ENCODE measurements at regions of chr12 and their contacts with region 1.

Region 1: GRCh38 chr12:751192-751998 is 984 bp upstream of the WNK1 start:
- DNase-seq: peak; percentile 89
- H3K4me3 Mint-ChIP-seq: no peak overlapping the region
- H3K27ac Mint-ChIP-seq: no peak overlapping the region
- H3K4me1 Mint-ChIP-seq: peaks cover 21% of the 10 kb centered on the region
- H3K27me3 Mint-ChIP-seq: no peaks in the 10 kb centered on the region

Region 2: DNA sequence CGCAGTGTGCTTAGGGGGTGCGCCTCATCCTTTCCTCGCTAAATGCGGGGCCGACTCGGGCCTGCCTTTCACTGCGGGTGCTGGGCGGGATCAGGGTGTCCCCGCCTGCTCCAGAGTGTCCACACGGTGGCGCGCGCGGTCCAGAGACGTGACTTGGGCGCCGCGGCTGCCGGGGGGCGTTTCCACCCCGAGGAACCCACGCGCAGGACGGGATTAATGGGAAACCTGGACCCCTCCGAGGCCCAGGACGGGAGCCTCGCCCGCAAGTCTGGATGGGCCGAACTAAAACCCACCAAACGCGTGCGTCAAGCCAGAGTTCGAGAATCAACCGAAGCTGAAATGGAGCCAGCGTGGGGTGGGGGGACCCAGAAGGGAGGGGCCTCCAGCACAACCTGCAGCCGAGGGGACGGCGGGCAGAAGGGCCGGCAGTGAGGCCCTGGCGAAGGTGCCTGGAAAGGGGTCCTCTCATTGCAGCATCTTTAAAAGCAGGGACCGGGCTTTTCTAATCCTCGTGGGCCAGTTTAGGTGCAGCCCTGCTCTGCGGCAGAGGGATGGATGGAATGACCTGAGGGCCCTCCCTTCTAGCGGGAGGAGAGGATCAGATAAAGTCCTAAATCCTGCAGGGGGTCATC is 181.5 kb before region 1 on chr12:
- CTCF ChIA-PET with region 1: interaction called, 91 read pairs
- POLR2A ChIA-PET with region 1: interaction called, 3 read pairs
- DNase-seq: peak; percentile 88
- H3K4me3 Mint-ChIP-seq: peak overlapping the region; percentile 73
- H3K27ac Mint-ChIP-seq: peak overlapping the region; percentile 68
- H3K4me1 Mint-ChIP-seq: peaks cover 77% of the 10 kb centered on the region
- H3K27me3 Mint-ChIP-seq: no peaks in the 10 kb centered on the region

Region 3: DNA sequence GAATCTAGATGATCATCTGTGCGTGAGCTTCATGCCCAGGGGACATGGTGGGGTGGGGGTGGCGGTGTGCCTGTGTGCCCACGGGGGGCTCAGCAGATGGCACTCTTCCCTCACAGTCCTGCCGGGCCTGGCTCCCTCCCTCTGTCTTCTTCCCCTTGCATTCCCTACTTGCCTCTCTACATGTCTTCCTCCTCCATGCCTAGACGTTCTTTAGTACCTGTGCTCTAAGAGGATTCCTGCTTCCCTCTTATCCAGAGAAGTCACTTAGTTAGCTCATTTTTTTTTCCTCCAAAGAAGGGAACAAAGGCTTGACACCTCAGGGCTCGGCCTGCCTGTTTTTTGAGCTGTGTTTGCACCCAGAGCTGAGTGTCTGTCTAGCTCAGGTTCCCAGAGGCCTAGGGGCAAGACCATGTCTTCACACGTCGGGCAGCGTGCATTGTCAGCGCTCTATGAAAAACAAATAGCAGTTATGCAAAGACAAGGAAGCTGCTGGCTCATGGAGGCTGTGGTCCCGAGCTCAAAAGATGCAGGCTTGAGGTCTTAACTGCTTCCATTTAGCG is 136.9 kb before region 1 on chr12:
- CTCF ChIA-PET with region 1: interaction called, 16 read pairs
- POLR2A ChIA-PET with region 1: interaction called, 5 read pairs
- DNase-seq: peak; percentile 32
- H3K4me3 Mint-ChIP-seq: no peak overlapping the region
- H3K27ac Mint-ChIP-seq: no peak overlapping the region
- H3K4me1 Mint-ChIP-seq: peaks cover 50% of the 10 kb centered on the region
- H3K27me3 Mint-ChIP-seq: no peaks in the 10 kb centered on the region

Region 4: DNA sequence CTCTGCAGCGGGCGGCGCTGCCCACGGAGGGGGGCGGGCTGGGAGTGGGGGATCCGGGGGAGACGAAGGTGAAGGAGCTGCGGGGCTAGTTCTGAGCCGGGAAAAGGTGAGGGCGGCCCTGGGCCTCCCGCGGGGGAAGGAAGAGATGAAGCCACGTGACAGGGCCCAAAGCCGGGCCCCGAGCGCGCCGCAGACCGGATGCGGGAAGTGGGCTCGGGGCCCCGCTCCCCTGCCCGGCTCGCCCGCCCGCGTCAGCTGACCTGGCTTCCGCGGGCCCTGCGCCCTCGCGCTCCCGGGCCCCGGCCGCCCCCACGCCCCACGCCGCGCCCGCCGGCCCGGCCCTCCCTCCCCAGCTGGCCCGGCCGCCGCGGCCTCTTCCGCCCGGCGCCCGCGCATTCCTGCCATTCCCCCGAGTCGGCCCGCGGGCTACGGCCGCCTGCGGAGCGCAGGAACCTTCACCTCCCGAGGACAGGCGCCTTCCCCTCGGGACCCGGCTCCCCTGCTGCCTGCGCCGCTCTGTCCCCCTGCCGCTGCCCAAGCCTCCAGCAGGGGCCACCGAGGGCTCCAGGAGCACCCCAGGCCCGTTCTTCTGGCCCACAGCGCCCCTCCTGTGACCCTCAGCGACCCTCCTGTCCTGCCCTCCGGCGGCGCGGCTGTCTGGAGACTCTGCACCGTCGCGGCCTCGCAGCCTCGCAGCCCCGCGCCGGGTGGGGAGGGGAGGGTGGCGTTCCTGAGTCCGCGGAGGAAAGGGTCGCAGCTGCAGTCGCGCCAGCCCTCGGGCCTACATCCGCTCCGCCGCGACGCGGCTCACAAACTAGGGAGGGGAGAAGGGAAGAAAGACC is 108.5 kb before region 1 on chr12:
- CTCF ChIA-PET with region 1: interaction called, 18 read pairs
- POLR2A ChIA-PET with region 1: interaction called, 3 read pairs
- DNase-seq: peak; percentile 79
- H3K4me3 Mint-ChIP-seq: peak overlapping the region; percentile 80
- H3K27ac Mint-ChIP-seq: peak overlapping the region; percentile 95
- H3K4me1 Mint-ChIP-seq: peaks cover 65% of the 10 kb centered on the region
- H3K27me3 Mint-ChIP-seq: no peaks in the 10 kb centered on the region

Region 5: DNA sequence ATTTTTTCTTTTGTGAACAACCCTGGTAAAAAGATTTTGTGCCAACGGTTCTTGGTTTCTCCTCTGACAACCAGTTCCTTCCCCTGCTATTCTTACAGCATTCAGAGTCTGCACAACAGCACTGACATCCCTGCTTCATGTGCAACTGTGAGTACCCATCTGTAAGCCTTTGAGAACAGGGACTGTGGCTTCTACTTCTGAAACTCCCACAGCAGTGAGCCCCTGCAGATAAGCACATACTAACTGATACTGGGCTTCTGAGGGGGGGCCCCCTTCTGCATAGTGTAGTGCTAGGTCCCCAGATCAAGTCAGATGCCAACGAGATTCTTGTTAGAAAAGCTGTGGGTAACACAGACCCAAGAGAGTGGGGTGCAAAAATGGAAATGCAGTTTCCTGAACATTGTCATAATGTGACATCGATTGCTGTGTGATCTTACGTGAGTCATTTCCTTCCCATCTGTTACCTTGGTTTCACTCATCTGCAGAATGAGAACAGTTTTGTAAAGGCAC is 77.1 kb before region 1 on chr12:
- CTCF ChIA-PET with region 1: interaction called, 19 read pairs
- POLR2A ChIA-PET with region 1: interaction called, 8 read pairs
- DNase-seq: peak; percentile 82
- H3K4me3 Mint-ChIP-seq: peak overlapping the region; percentile 56
- H3K27ac Mint-ChIP-seq: peak overlapping the region; percentile 96
- H3K4me1 Mint-ChIP-seq: peaks cover 67% of the 10 kb centered on the region
- H3K27me3 Mint-ChIP-seq: no peaks in the 10 kb centered on the region

Region 6: GRCh38 chr12:726281-727140 is 24.9 kb before region 1 on chr12:
- CTCF ChIA-PET with region 1: interaction called, 31 read pairs
- POLR2A ChIA-PET with region 1: interaction called, 4 read pairs
- DNase-seq: no peak
- H3K4me3 Mint-ChIP-seq: no peak overlapping the region
- H3K27ac Mint-ChIP-seq: no peak overlapping the region
- H3K4me1 Mint-ChIP-seq: peaks cover 71% of the 10 kb centered on the region
- H3K27me3 Mint-ChIP-seq: no peaks in the 10 kb centered on the region

Region 7: GRCh38 chr12:848173-848865 is 96.9 kb after region 1 on chr12:
- CTCF ChIA-PET with region 1: no interaction called
- POLR2A ChIA-PET with region 1: no interaction called
- DNase-seq: no peak
- H3K4me3 Mint-ChIP-seq: no peak overlapping the region
- H3K27ac Mint-ChIP-seq: peak overlapping the region; percentile 6
- H3K4me1 Mint-ChIP-seq: peaks cover 22% of the 10 kb centered on the region
- H3K27me3 Mint-ChIP-seq: no peaks in the 10 kb centered on the region